IMR-90 (cell line): ENCODE measurements at regions of chr1 and their contacts with region 1.

Region 1: GRCh38 chr1:44652445-44653106 is 21.7 kb downstream of the TMEM53 start:
- DNase-seq: peak; percentile 42
- ATAC-seq: peak; percentile 98
- H3K4me3 ChIP-seq: no peak overlapping the region
- H3K27ac ChIP-seq: no peak overlapping the region
- H3K4me1 ChIP-seq: no peaks in the 10 kb centered on the region
- H3K27me3 ChIP-seq: no peaks in the 10 kb centered on the region
- CTCF ChIP-seq: peak; percentile 95
- POLR2A ChIP-seq: 0 out of 2 replicates have a peak, but pooled peaks have one; percentile 41
- RAD21 ChIP-seq: peak; percentile 98

Region 2: GRCh38 chr1:44220001-44220733 is 432.4 kb before region 1 on chr1:
- CTCF ChIA-PET with region 1: no interaction called
- POLR2A ChIA-PET with region 1: no interaction called
- dilution Hi-C with region 1: no loop called
- in situ Hi-C with region 1: no loop called
- intact Hi-C with region 1: loop called (anchors 1 kb)
- DNase-seq: peak; percentile 89
- ATAC-seq: peak; percentile 75
- H3K4me3 ChIP-seq: no peak overlapping the region
- H3K27ac ChIP-seq: peak overlapping the region; percentile 14; the same call in 1 of the 2 replicates
- H3K4me1 ChIP-seq: peaks cover 11% of the 10 kb centered on the region
- H3K27me3 ChIP-seq: no peaks in the 10 kb centered on the region
- CTCF ChIP-seq: peak; percentile 36
- POLR2A ChIP-seq: no peak
- RAD21 ChIP-seq: peak; percentile 6; the same call in 1 of the 2 replicates

Region 3: DNA sequence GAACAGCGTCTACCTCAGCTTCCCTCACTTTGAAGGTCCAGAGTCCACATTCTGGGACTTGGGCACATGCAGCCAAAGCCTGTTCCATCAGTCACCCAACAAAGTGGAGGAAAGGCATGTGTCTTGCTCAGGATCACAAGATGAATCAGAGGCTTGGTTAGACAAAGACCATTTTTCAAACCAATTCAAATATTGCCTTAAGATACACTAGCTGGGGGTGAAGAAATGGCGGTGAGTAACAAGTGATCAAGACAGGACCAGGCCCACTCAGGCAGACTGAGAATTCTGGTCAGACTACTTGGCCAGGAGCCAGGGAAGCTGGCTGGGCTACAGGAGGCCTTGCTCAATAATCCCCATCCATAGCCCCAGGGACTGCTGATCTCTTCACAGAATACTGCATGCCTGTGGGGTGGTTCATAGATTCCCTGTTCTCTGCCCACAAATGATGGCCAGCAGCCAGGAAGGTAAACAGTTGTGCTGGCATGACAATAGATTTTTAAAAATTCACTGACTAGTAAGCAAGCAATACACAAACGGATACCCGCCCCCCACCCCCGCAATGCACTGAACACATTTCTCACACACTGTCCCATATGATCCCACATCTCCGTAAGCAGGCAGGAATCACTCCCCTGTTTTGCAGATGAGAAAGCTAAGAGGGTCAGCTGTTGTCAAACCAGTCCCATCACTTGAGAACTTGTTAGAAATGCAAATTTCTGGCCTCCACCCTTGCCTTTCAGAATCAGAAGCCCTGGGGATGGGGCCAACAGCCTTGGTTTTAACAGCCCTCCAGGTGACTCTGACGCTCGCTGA is 324.7 kb before region 1 on chr1:
- CTCF ChIA-PET with region 1: no interaction called
- POLR2A ChIA-PET with region 1: no interaction called
- dilution Hi-C with region 1: no loop called
- in situ Hi-C with region 1: no loop called
- intact Hi-C with region 1: loop called (anchors 5 kb)
- DNase-seq: peak; percentile 100
- ATAC-seq: peak; percentile 93
- H3K4me3 ChIP-seq: no peak overlapping the region
- H3K27ac ChIP-seq: peak overlapping the region; percentile 7
- H3K4me1 ChIP-seq: peaks cover 15% of the 10 kb centered on the region
- H3K27me3 ChIP-seq: no peaks in the 10 kb centered on the region
- CTCF ChIP-seq: no peak
- POLR2A ChIP-seq: no peak
- RAD21 ChIP-seq: no peak

Region 4: GRCh38 chr1:44377925-44378784 is 274.4 kb before region 1 on chr1:
- CTCF ChIA-PET with region 1: interaction called, 3 read pairs
- POLR2A ChIA-PET with region 1: no interaction called
- dilution Hi-C with region 1: no loop called
- in situ Hi-C with region 1: loop called (anchors 5 kb)
- intact Hi-C with region 1: loop called (anchors 1 kb)
- DNase-seq: peak; percentile 52
- ATAC-seq: peak; percentile 74
- H3K4me3 ChIP-seq: no peak overlapping the region
- H3K27ac ChIP-seq: no peak overlapping the region
- H3K4me1 ChIP-seq: no peaks in the 10 kb centered on the region
- H3K27me3 ChIP-seq: peaks cover 32% of the 10 kb centered on the region
- CTCF ChIP-seq: peak; percentile 74
- POLR2A ChIP-seq: no peak
- RAD21 ChIP-seq: peak; percentile 78

Region 5: DNA sequence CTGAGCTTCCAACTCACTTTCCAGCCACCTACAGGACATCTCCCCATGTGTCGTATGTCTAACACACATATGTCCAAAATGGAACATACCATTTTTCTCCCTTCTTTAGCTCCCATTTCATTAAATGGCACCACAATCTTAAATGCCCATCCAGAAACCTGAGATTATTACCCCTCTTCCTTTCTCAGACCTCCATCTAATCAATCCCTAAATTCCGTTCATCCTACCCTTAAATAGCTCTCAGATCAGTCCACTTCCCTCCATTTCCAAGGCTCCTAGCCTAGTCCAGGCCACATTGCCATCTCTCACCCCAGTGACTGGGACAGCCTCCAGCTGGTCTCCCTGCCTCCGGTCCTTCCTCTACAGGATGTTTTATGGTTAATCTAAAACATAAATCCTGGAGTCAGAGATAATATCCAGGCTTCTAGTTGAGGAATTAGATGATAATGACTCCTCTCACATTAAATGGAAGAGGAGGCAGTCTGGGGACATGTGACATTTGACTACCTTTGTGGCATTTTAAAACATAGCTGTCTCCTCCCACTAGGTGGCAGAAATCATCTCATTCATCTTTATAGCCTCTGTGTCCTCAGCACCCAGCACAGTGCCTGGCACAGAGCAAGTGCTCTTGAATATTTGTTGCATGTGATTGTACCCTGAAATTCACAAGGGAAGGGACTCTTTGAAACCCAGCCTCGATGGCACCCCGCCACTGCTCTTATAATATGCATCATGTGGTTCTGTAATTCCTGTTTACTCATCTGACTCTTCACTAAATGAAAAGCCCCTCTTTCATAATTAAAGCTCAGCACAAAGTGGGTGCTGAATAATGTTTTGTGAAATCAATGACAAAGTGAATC is 80.6 kb before region 1 on chr1:
- CTCF ChIA-PET with region 1: interaction called, 11 read pairs
- POLR2A ChIA-PET with region 1: no interaction called
- dilution Hi-C with region 1: no loop called
- in situ Hi-C with region 1: no loop called
- intact Hi-C with region 1: no loop called
- DNase-seq: no peak
- ATAC-seq: no peak
- H3K4me3 ChIP-seq: no peak overlapping the region
- H3K27ac ChIP-seq: no peak overlapping the region
- H3K4me1 ChIP-seq: no peaks in the 10 kb centered on the region
- H3K27me3 ChIP-seq: peaks cover 58% of the 10 kb centered on the region
- CTCF ChIP-seq: peak; percentile 21; the same call in 1 of the 2 replicates
- POLR2A ChIP-seq: no peak
- RAD21 ChIP-seq: 0 out of 2 replicates have a peak, but pooled peaks have one; percentile 10

Region 6: GRCh38 chr1:44609412-44609767 is 43.2 kb before region 1 on chr1:
- CTCF ChIA-PET with region 1: interaction called, 39 read pairs
- POLR2A ChIA-PET with region 1: no interaction called
- dilution Hi-C with region 1: no loop called
- in situ Hi-C with region 1: loop called (anchors 5 kb)
- intact Hi-C with region 1: loop called (anchors 1 kb)
- DNase-seq: peak; percentile 44
- ATAC-seq: peak; percentile 94
- H3K4me3 ChIP-seq: no peak overlapping the region
- H3K27ac ChIP-seq: no peak overlapping the region
- H3K4me1 ChIP-seq: no peaks in the 10 kb centered on the region
- H3K27me3 ChIP-seq: peaks cover 41% of the 10 kb centered on the region
- CTCF ChIP-seq: peak; percentile 70
- POLR2A ChIP-seq: no peak
- RAD21 ChIP-seq: peak; percentile 85

Region 7: GRCh38 chr1:44631647-44632539 is 20.7 kb before region 1 on chr1:
- CTCF ChIA-PET with region 1: interaction called, 11 read pairs
- POLR2A ChIA-PET with region 1: no interaction called
- dilution Hi-C with region 1: no loop called
- in situ Hi-C with region 1: no loop called
- intact Hi-C with region 1: no loop called
- DNase-seq: peak; percentile 81
- ATAC-seq: peak; percentile 84
- H3K4me3 ChIP-seq: peak overlapping the region; percentile 93
- H3K27ac ChIP-seq: peak overlapping the region; percentile 94
- H3K4me1 ChIP-seq: peaks cover 16% of the 10 kb centered on the region
- H3K27me3 ChIP-seq: no peaks in the 10 kb centered on the region
- CTCF ChIP-seq: no peak
- POLR2A ChIP-seq: peak; percentile 86
- RAD21 ChIP-seq: no peak

Region 8: DNA sequence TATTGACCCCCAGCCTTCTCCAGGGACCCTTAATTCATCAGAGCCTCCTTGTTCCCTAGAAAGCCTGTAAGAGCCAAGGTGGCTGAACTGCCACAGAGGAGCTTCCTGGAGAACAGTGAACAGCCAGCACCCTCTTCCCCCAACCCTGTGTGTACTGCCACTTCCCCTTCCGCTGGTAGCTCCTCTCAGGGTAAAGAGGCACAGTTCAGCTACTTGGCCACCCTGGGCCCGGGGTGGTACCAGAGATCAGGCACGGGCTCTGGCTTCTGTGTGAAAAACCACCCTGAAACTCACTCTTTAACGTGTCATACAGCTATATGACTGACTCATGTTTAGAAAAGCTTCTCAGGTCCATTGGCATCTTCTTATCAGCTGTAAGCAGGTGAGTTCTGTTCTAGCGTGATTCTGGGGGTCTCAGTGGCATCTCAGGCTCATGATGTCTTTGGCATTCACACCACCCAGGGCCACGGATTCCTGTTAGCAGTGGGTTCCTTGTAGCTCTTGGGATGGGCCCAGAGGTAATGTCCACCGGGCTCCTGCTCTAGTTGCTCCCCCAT is 44.3 kb after region 1 on chr1:
- CTCF ChIA-PET with region 1: no interaction called
- POLR2A ChIA-PET with region 1: no interaction called
- dilution Hi-C with region 1: no loop called
- in situ Hi-C with region 1: no loop called
- intact Hi-C with region 1: no loop called
- DNase-seq: no peak
- ATAC-seq: no peak
- H3K4me3 ChIP-seq: no peak overlapping the region
- H3K27ac ChIP-seq: no peak overlapping the region
- H3K4me1 ChIP-seq: peaks cover 2% of the 10 kb centered on the region; the same call in 1 of the 2 replicates
- H3K27me3 ChIP-seq: peaks cover 14% of the 10 kb centered on the region
- CTCF ChIP-seq: no peak
- POLR2A ChIP-seq: no peak
- RAD21 ChIP-seq: no peak